B cell (primary cell): ENCODE measurements at regions of chr7 and their contacts with region 1.

Region 1: GRCh38 chr7:94129443-94130140 is 125.4 kb upstream of the BET1 start:
- DNase-seq: no peak
- ATAC-seq: no peak
- H3K4me3 ChIP-seq: no peak overlapping the region
- H3K4me3 Mint-ChIP-seq: no peak overlapping the region
- H3K27ac ChIP-seq: no peak overlapping the region
- H3K27ac Mint-ChIP-seq: no peak overlapping the region
- H3K4me1 ChIP-seq: no peaks in the 10 kb centered on the region
- H3K4me1 Mint-ChIP-seq: no peaks in the 10 kb centered on the region
- H3K27me3 ChIP-seq: peaks cover 0 to 4% (median 0%) of the 10 kb centered on the region in 4 experiments
- H3K27me3 Mint-ChIP-seq: peaks cover 21% of the 10 kb centered on the region
- CTCF ChIP-seq: no peak

Region 2: DNA sequence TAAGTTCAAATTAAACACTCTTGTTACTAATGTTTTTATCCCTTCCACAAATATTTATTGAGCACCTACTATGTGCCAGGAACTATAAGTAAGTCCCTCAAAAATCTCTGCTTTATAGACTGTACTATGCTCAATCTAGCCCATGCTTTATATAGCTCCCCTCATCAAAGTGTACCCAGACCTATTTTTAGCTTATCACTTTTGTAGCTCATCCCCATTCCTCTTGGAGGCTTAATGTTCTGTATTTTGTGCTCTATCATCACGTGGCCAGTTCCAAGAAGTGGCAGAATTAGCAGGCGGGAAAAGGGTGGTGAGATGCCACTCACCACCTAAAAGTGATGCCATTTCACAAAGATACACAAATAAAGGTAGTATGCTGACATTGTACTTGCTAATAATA is 12.7 kb after region 1 on chr7:
- CTCF ChIA-PET with region 1: no interaction called
- POLR2A ChIA-PET with region 1: no interaction called
- intact Hi-C with region 1: loop called (anchors 2 kb)
- DNase-seq: no peak
- ATAC-seq: no peak
- H3K4me3 ChIP-seq: no peak overlapping the region
- H3K4me3 Mint-ChIP-seq: no peak overlapping the region
- H3K27ac ChIP-seq: no peak overlapping the region
- H3K27ac Mint-ChIP-seq: no peak overlapping the region
- H3K4me1 ChIP-seq: no peaks in the 10 kb centered on the region
- H3K4me1 Mint-ChIP-seq: no peaks in the 10 kb centered on the region
- H3K27me3 ChIP-seq: peaks cover 0 to 2% (median 0%) of the 10 kb centered on the region in 4 experiments
- H3K27me3 Mint-ChIP-seq: peaks cover 27% of the 10 kb centered on the region
- CTCF ChIP-seq: no peak